ENCODE measurements at regions of chr18 and their contacts with region 1.

Region 1: DNA sequence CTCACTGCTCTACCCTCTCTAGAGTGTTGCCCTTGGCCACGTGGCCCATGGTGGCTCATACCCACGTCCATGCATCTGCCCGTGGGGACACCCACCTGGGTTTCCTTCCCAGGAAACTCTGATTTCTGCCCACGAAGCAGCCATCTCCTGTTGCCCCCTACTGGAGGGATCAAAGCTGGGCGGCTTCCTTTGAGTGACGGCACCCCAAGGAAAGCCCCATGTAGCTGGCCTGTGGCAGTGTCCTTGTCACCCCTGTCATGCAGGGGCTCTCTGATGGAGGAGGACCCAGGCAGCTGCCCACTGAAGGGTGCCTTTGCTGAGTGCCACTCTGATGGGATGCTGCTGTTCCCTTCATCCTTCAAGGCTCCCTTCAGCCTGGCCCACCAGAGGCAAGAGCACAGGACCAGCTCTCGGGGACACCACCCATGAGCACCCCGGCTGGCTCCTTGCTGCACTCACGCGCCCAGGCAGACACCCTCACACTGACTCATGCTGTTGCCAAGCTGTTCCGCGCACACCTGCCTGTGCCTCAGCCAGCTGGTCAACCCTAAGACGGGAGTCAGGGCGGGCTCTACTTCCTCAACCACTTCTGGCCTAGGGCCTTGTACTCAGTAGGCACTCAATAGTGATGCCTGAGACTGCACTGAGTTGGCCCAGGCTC is 101.1 kb downstream of the CTIF start:
- DNase-seq: no peak
- H3K4me3 ChIP-seq: no peak overlapping the region
- H3K27ac ChIP-seq: no peak overlapping the region
- H3K4me1 ChIP-seq: no peaks in the 10 kb centered on the region
- H3K27me3 ChIP-seq: no peaks in the 10 kb centered on the region
- CTCF ChIP-seq: peak in 1 of 5 experiments; percentile 14
- EP300 ChIP-seq: no peak
- POLR2A ChIP-seq: no peak

Region 2: GRCh38 chr18:48488388-48488850 is 151.5 kb before region 1 on chr18:
- in situ Hi-C with region 1: loop called in 1 of 4 experiments (anchors 10 kb)
- intact Hi-C with region 1: no loop called
- DNase-seq: peak; percentile 70
- H3K4me3 ChIP-seq: no peak overlapping the region
- H3K27ac ChIP-seq: no peak overlapping the region
- H3K4me1 ChIP-seq: peaks cover 0 to 13% (median 1%) of the 10 kb centered on the region in 4 donors
- H3K27me3 ChIP-seq: no peaks in the 10 kb centered on the region
- CTCF ChIP-seq: no peak
- EP300 ChIP-seq: no peak
- POLR2A ChIP-seq: no peak

Region 3: DNA sequence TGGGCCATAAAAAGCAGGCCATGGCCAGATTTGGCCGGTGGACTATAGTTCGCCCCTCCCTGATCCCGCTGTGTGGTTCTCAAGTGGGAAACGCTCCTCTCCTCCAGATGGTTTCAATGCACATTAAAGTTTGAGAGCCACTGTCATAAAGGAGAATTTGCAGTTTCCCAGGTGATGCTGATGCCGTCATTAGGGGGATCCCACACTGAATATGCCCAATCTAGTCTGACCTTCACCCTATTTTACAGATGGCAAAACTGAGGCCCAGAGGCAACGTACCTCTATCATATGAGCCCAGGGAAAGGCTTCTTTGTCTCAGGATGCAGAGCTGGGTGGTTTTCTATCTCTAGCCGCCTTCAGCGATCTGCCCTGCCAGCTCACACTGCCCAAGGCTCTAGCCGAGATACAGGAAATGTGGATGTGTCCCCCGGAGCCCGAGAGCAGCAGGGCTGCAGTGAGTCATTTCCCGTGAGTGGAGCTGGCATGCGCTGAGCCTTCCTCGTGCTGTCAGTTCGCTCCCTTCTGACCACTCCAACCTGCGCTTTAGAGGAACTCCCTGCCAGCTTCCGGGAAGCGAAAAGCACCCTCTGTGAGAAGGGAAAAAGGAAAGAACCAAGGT is 194.6 kb after region 1 on chr18:
- in situ Hi-C with region 1: no loop called
- intact Hi-C with region 1: no loop called
- DNase-seq: peak; percentile 69
- H3K4me3 ChIP-seq: peak overlapping the region in 1 of 4 donors; percentile 7
- H3K27ac ChIP-seq: peak overlapping the region in 3 of 4 donors; percentile 11 to 28 (median 25)
- H3K4me1 ChIP-seq: peaks cover 10 to 30% (median 17%) of the 10 kb centered on the region in 4 donors
- H3K27me3 ChIP-seq: no peaks in the 10 kb centered on the region
- CTCF ChIP-seq: no peak
- EP300 ChIP-seq: no peak
- POLR2A ChIP-seq: no peak